PC-3 (cell line): ENCODE measurements at regions of chr18 and their contacts with region 1.

Region 1: DNA sequence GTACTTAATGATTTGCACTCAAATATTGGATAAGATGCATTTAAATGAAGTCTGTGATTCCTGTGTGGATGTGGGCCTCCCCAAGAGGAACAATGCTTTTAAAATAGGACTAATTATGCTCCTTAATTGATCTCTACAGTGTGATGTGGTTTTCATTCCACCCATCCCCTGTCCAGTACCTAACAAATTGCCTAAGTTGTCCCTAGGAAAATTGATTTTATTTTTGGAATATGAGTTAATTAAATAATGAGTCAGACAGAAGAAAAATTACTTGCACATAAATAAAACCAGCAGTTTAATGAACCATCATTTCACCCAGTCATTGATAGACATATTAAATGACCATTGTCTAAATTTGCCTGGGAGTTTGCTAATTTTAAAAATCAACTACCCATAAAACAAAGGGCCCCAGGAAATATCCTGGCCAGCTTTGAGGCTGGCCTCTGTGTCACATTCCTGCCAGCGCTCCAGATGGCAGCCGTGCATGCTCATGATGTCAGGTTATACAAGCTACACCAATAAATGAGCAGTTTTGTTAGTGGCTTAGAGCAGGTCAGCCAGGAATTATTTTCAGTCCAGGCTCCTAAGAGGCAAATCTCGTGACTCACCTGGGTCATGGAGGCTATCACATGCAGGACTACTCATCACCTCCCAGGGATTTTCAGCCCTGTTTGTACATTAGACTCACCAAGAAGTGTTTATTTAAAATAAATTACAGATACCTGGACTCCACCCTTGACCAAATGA is 31.9 kb downstream of the ABHD3 start:
- DNase-seq: peak; percentile 87
- ATAC-seq: peak; percentile 64
- H3K4me3 ChIP-seq: no peak overlapping the region
- H3K27ac ChIP-seq: peak overlapping the region; percentile 89
- H3K4me1 ChIP-seq: peaks cover 60% of the 10 kb centered on the region
- H3K27me3 ChIP-seq: no peaks in the 10 kb centered on the region
- CTCF ChIP-seq: 0 out of 2 replicates have a peak, but pooled peaks have one; percentile 8

Region 2: DNA sequence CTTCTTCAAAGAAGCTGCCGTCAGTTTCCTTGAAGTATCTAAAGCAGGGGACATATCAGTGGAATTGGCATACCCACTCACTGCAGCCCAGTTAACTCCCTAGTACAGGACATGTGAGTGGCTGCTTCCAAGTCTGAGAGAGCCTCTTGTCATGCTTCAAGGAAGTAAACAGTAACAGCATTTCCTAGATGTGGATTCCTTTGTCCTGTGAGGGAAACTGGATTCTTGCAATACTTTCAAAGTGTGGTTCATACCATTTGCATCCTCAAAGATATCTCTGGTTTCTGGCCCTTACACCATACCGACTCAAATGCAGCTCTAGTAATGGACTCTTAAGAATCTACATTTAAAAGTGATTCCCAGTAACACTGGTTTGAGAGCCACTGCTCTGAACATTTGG is 159.4 kb before region 1 on chr18:
- CTCF ChIA-PET with region 1: no interaction called
- POLR2A ChIA-PET with region 1: no interaction called
- intact Hi-C with region 1: no loop called
- DNase-seq: no peak
- ATAC-seq: no peak
- H3K4me3 ChIP-seq: no peak overlapping the region
- H3K27ac ChIP-seq: no peak overlapping the region
- H3K4me1 ChIP-seq: no peaks in the 10 kb centered on the region
- H3K27me3 ChIP-seq: no peaks in the 10 kb centered on the region
- CTCF ChIP-seq: no peak

Region 3: GRCh38 chr18:21636769-21637168 is 35.9 kb before region 1 on chr18:
- CTCF ChIA-PET with region 1: no interaction called
- POLR2A ChIA-PET with region 1: interaction called, 11 read pairs
- intact Hi-C with region 1: loop called (anchors 1 kb)
- DNase-seq: peak; percentile 55
- ATAC-seq: peak; percentile 6; the same call in 1 of the 2 replicates
- H3K4me3 ChIP-seq: no peak overlapping the region
- H3K27ac ChIP-seq: peak overlapping the region; percentile 86
- H3K4me1 ChIP-seq: peaks cover 35% of the 10 kb centered on the region
- H3K27me3 ChIP-seq: no peaks in the 10 kb centered on the region
- CTCF ChIP-seq: no peak

Region 4: DNA sequence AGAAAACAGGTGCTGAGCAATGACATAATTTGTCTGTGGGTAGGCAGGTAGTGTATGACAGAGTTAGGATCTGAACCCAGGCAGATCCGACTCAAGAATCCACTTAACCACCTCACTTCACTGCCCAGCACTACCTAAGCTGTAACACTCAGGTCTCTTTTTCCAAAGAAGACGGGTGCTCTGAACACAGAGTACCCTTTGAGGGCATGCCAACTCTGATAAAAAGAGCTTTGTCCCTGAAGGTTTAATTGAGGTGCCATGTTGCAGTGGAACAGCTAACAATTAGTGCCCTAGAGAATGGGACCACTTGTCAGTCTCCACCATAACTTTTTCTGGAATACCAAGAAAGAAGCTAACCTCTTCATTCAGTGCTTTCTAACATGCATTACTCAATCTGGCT is 20.6 kb after region 1 on chr18:
- CTCF ChIA-PET with region 1: no interaction called
- POLR2A ChIA-PET with region 1: no interaction called
- intact Hi-C with region 1: no loop called
- DNase-seq: no peak
- ATAC-seq: no peak
- H3K4me3 ChIP-seq: no peak overlapping the region
- H3K27ac ChIP-seq: no peak overlapping the region
- H3K4me1 ChIP-seq: no peaks in the 10 kb centered on the region
- H3K27me3 ChIP-seq: no peaks in the 10 kb centered on the region
- CTCF ChIP-seq: no peak

Region 5: DNA sequence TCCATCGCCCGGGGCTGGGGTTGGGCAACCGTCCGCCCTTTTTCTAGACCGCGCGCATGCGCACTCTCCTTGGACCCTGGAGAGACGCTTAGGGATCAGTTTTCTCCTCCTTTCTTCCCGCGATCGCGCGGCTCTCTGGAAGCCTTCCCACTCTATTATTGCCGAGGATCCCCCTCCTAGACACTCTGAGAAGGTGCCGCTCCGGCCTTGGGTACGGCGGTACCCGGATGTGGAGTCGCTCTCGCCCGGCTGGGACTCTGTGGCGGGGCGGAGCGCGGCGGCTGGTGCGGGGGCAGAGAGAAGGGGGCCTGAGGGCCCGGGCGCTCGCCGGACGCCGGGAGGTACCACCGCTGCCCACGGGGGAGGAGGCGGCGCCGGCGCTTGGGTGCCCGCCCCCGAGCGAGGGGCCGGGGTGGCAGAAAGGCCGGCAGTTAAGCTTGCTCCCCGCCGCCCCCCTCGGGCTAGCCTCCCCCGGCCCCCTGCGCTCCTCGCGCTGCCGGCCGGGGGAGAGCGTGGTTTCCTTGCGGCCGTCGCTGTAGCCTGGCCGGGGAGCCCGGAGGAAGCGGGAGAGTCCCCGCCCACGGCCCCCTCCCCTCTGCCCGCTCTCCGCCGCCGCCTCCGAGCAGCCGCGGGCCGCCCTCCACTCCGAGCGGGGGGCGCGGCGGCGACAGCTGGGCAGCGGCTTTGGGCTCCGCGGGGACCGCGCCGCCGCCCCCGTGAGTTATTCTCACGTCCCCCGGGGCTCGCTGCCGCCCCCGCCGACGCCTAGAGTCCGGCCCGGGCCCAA is 68.2 kb after region 1 on chr18 and contains the start of gene MIB1:
- CTCF ChIA-PET with region 1: interaction called, 6 read pairs
- POLR2A ChIA-PET with region 1: interaction called, 14 read pairs
- intact Hi-C with region 1: no loop called
- DNase-seq: no peak
- ATAC-seq: peak; percentile 66
- H3K4me3 ChIP-seq: peak within 1 kb of the TSS; percentile 88
- H3K27ac ChIP-seq: peak within 1 kb of the TSS; percentile 85
- H3K4me1 ChIP-seq: peaks cover 27% of the 10 kb centered on the region
- H3K27me3 ChIP-seq: no peaks in the 10 kb centered on the region
- CTCF ChIP-seq: no peak
- total RNA-seq, gene MIB1: 25.1 and 26.3 TPM in 2 replicates